CD4-positive, alpha-beta memory T cell (primary cell): ENCODE measurements at regions of chr5 and their contacts with region 1.

Region 1: GRCh38 chr5:140564196-140565023 is at the starts of genes APBB3 and SLC35A4:
- DNase-seq: peak; percentile 97 to 100 (median 99)
- H3K4me3 ChIP-seq: peak within 1 kb of the TSS; percentile 85
- H3K4me3 Mint-ChIP-seq: peak within 1 kb of the TSS; percentile 91 to 99 (median 95)
- H3K27ac ChIP-seq: peak within 1 kb of the TSS; percentile 91
- H3K27ac Mint-ChIP-seq: peak within 1 kb of the TSS; percentile 91 to 100 (median 98)
- H3K4me1 ChIP-seq: peaks cover 42% of the 10 kb centered on the region
- H3K4me1 Mint-ChIP-seq: peaks cover 34 to 66% (median 53%) of the 10 kb centered on the region in 4 donors
- H3K27me3 ChIP-seq: no peaks in the 10 kb centered on the region
- H3K27me3 Mint-ChIP-seq: no peaks in the 10 kb centered on the region
- total RNA-seq, gene APBB3: 72.9 to 75.4 TPM
- total RNA-seq, gene SLC35A4: 49.0 to 59.4 TPM

Region 2: GRCh38 chr5:140113699-140114263 is 450.6 kb before region 1 on chr5 and contains the start of gene PURA:
- CTCF ChIA-PET with region 1: no interaction called
- POLR2A ChIA-PET with region 1: no interaction called
- intact Hi-C with region 1: loop called (anchors 5 kb)
- DNase-seq: peak; percentile 97 to 98 (median 98)
- H3K4me3 ChIP-seq: peak within 1 kb of the TSS; percentile 76 to 88
- H3K4me3 Mint-ChIP-seq: peak within 1 kb of the TSS; percentile 94 to 100 (median 96)
- H3K27ac ChIP-seq: peak within 1 kb of the TSS; percentile 80
- H3K27ac Mint-ChIP-seq: peak within 1 kb of the TSS; percentile 93 to 98 (median 97)
- H3K4me1 ChIP-seq: peaks cover 79% of the 10 kb centered on the region
- H3K4me1 Mint-ChIP-seq: peaks cover 43 to 81% (median 67%) of the 10 kb centered on the region in 4 donors
- H3K27me3 ChIP-seq: no peaks in the 10 kb centered on the region
- H3K27me3 Mint-ChIP-seq: no peaks in the 10 kb centered on the region
- total RNA-seq, gene PURA: 31.2 to 36.2 TPM

Region 3: GRCh38 chr5:140547508-140548299 is 16.7 kb before region 1 on chr5 and contains the start of gene EIF4EBP3:
- CTCF ChIA-PET with region 1: interaction called, 13 read pairs
- POLR2A ChIA-PET with region 1: interaction called, 79 read pairs
- intact Hi-C with region 1: loop called (anchors 1 kb)
- DNase-seq: peak; percentile 84 to 92 (median 87)
- H3K4me3 ChIP-seq: peak within 1 kb of the TSS; percentile 57 to 76
- H3K4me3 Mint-ChIP-seq: peak within 1 kb of the TSS; percentile 85 to 93 (median 89)
- H3K27ac ChIP-seq: peak within 1 kb of the TSS; percentile 77
- H3K27ac Mint-ChIP-seq: peak within 1 kb of the TSS; percentile 91 to 97 (median 97)
- H3K4me1 ChIP-seq: peaks cover 30% of the 10 kb centered on the region
- H3K4me1 Mint-ChIP-seq: peaks cover 19 to 50% (median 26%) of the 10 kb centered on the region in 4 donors
- H3K27me3 ChIP-seq: no peaks in the 10 kb centered on the region
- H3K27me3 Mint-ChIP-seq: no peaks in the 10 kb centered on the region
- total RNA-seq, gene EIF4EBP3: 15.3 to 18.8 TPM

Region 4: GRCh38 chr5:140639148-140639979 is 75.0 kb after region 1 on chr5 and contains the start of gene TMCO6:
- CTCF ChIA-PET with region 1: interaction called, 5 read pairs
- POLR2A ChIA-PET with region 1: interaction called, 21 read pairs
- intact Hi-C with region 1: loop called (anchors 1 kb)
- DNase-seq: peak; percentile 92 to 95 (median 95)
- H3K4me3 ChIP-seq: peak within 1 kb of the TSS; percentile 71 to 84
- H3K4me3 Mint-ChIP-seq: peak within 1 kb of the TSS; percentile 90 to 98 (median 93)
- H3K27ac ChIP-seq: peak within 1 kb of the TSS; percentile 69
- H3K27ac Mint-ChIP-seq: peak within 1 kb of the TSS; percentile 90 to 99 (median 96)
- H3K4me1 ChIP-seq: peaks cover 22% of the 10 kb centered on the region
- H3K4me1 Mint-ChIP-seq: peaks cover 21 to 50% (median 34%) of the 10 kb centered on the region in 4 donors
- H3K27me3 ChIP-seq: no peaks in the 10 kb centered on the region
- H3K27me3 Mint-ChIP-seq: no peaks in the 10 kb centered on the region
- total RNA-seq, gene TMCO6: 50.0 to 56.3 TPM

Region 5: DNA sequence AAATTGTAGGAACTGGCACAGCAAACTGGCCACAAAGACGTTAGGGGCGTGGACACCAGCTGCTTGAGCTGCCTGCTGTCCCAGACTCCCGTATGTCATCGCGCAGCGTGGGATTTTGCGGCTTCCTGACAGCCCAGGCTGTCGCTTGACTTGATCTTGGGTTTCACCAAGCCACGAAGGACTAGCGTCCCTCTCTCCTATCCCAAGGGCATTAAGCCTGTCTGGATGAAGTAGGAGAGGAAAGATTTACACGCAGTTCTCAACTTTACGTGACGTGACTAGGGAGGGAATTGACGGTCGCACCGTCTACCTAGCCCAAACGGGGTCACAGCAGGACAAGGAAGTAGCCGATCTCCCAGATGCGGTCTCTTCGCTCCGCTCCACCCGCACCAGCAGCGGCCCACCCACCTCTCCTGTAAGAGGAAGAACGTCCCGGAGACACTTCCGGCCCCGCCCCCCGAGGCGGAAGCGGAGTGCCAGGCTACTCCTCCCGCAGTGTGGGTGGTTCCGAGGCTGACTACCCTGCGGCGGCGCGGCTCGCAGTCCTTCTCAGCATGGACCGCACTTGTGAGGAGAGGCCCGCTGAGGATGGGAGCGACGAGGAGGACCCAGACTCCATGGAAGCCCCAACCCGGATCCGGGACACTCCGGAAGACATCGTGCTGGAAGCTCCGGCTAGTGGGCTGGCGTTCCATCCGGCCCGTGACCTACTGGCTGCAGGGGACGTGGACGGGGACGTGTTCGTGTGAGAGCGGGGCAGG is 100.1 kb after region 1 on chr5 and contains the start of gene WDR55:
- CTCF ChIA-PET with region 1: no interaction called
- POLR2A ChIA-PET with region 1: interaction called, 4 read pairs
- intact Hi-C with region 1: loop called (anchors 1 kb)
- DNase-seq: peak; percentile 94 to 99 (median 94)
- H3K4me3 ChIP-seq: peak within 1 kb of the TSS; percentile 90 to 98
- H3K4me3 Mint-ChIP-seq: peak within 1 kb of the TSS; percentile 96 to 99 (median 98)
- H3K27ac ChIP-seq: peak within 1 kb of the TSS; percentile 95
- H3K27ac Mint-ChIP-seq: peak within 1 kb of the TSS; percentile 98 to 99 (median 99)
- H3K4me1 ChIP-seq: peaks cover 20% of the 10 kb centered on the region
- H3K4me1 Mint-ChIP-seq: peaks cover 27 to 52% (median 34%) of the 10 kb centered on the region in 4 donors
- H3K27me3 ChIP-seq: no peaks in the 10 kb centered on the region
- H3K27me3 Mint-ChIP-seq: no peaks in the 10 kb centered on the region
- total RNA-seq, gene WDR55: 47.1 to 49.6 TPM

Region 6: GRCh38 chr5:140700177-140701144 is 136.1 kb after region 1 on chr5 and contains the start of gene ZMAT2:
- CTCF ChIA-PET with region 1: no interaction called
- POLR2A ChIA-PET with region 1: no interaction called
- intact Hi-C with region 1: loop called (anchors 1 kb)
- DNase-seq: peak; percentile 89 to 98 (median 94)
- H3K4me3 ChIP-seq: peak within 1 kb of the TSS; percentile 48 to 91
- H3K4me3 Mint-ChIP-seq: peak within 1 kb of the TSS; percentile 95 to 99 (median 98)
- H3K27ac ChIP-seq: peak within 1 kb of the TSS; percentile 80
- H3K27ac Mint-ChIP-seq: peak within 1 kb of the TSS; percentile 91 to 99 (median 98)
- H3K4me1 ChIP-seq: peaks cover 18% of the 10 kb centered on the region
- H3K4me1 Mint-ChIP-seq: peaks cover 17 to 31% (median 23%) of the 10 kb centered on the region in 4 donors
- H3K27me3 ChIP-seq: no peaks in the 10 kb centered on the region
- H3K27me3 Mint-ChIP-seq: no peaks in the 10 kb centered on the region
- total RNA-seq, gene ZMAT2: 56.3 to 57.4 TPM

Region 7: DNA sequence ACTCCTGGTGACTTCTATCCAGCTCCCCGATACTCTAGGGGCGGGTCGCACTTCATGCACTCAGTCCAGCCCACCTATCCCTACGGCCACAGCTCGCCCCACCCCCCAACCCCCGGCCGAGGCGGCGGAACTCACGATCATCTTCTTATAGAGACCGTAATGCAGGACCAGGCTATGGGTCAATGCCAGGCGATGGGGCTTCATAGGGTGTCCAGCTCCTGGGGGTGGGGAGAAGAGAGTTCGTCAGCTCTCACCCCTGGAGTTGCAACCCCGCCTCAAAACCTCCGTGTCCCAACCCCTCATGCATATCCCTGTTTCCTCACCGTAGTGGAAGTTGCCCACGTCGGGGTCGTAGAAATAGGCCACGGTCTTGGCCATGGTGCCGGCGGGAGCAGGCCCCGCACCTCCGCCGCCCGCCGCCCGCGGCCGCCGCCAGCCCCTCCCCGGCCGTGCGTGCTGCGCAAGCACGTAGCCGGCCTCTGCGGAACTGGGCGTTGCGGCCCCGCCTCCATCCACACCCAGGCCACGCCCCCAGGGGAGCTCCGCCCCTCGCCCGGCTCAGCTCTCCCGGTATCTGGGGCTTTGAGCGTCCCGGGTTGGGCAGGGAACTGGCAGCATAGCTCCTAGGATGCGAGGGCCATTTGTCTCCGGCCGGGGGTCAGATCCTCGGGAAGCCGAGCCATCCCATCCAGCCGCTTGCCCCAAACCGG is 1072.2 kb after region 1 on chr5 and contains the starts of genes HDAC3 and RELL2:
- CTCF ChIA-PET with region 1: no interaction called
- POLR2A ChIA-PET with region 1: no interaction called
- intact Hi-C with region 1: loop called (anchors 10 kb)
- DNase-seq: peak; percentile 89 to 95 (median 93)
- H3K4me3 ChIP-seq: peak within 1 kb of the TSS; percentile 86 to 98
- H3K4me3 Mint-ChIP-seq: peak within 1 kb of the TSS; percentile 88 to 96 (median 94)
- H3K27ac ChIP-seq: peak within 1 kb of the TSS; percentile 87
- H3K27ac Mint-ChIP-seq: peak within 1 kb of the TSS; percentile 90 to 98 (median 96)
- H3K4me1 ChIP-seq: peaks cover 50% of the 10 kb centered on the region
- H3K4me1 Mint-ChIP-seq: peaks cover 31 to 51% (median 39%) of the 10 kb centered on the region in 4 donors
- H3K27me3 ChIP-seq: no peaks in the 10 kb centered on the region
- H3K27me3 Mint-ChIP-seq: no peaks in the 10 kb centered on the region
- total RNA-seq, gene HDAC3: 85.1 to 91.0 TPM
- total RNA-seq, gene RELL2: 20.4 to 21.3 TPM